Caco-2 (cell line): ENCODE measurements at regions of chr11 and their contacts with region 1.

Region 1: DNA sequence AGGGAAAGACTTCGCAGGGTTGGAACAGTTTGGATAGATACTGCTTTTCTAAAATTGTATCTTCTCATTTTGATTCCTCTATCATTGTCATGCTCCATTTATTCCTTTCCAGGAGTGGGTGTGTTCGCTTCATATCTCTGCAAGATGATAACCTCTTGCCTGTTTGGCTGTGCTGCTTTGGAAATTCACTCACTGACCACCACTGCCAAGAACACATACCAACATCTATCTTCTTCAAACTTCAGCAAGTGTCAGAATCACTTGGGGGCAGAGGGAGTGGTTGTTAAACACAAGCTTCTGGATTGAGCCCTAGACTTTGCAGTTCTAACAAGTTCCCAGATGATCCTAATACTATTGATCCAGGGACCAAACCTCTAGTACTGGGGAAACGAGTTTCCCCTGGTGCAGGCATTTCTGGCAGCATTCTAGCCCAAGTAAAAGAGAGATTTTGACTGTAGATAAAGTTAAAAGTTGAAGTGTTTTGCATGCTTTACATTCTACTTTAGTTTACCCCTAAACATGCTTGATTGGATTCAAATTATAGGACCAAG is 11.5 kb upstream of the DKK3 start:
- DNase-seq: peak in 1 of 2 experiments; percentile 26
- H3K4me3 ChIP-seq: no peak overlapping the region
- H3K4me3 Mint-ChIP-seq: no peak overlapping the region
- H3K27ac Mint-ChIP-seq: peak overlapping the region; percentile 1
- H3K4me1 ChIP-seq: peaks cover 19% of the 10 kb centered on the region
- H3K4me1 Mint-ChIP-seq: peaks cover 11% of the 10 kb centered on the region
- H3K27me3 ChIP-seq: no peaks in the 10 kb centered on the region
- H3K27me3 Mint-ChIP-seq: no peaks in the 10 kb centered on the region
- CTCF ChIP-seq: no peak

Region 2: DNA sequence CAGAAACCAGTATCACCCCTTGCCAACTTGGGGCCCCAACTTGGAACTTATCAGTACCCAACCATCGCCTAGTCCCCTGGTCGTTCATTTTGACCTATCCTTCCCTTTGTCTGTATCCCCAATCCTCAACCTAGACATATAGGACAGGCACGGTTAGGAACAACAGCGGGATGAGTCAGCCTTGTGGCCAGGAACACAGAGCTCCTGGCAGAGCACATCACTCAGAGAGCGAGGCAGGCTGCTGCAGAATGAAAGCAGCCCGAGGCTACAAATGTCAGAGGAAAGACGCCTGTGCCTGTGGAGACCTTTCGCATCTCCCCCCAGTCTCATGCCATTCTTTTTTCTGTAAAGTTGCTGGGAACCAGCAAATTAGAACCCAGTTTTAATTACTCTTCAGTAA is 26.1 kb before region 1 on chr11:
- CTCF ChIA-PET with region 1: no interaction called
- POLR2A ChIA-PET with region 1: no interaction called
- intact Hi-C with region 1: loop called (anchors 2 kb)
- DNase-seq: no peak
- H3K4me3 ChIP-seq: no peak overlapping the region
- H3K4me3 Mint-ChIP-seq: peak overlapping the region; percentile 52
- H3K27ac Mint-ChIP-seq: peak overlapping the region; percentile 95
- H3K4me1 ChIP-seq: peaks cover 50% of the 10 kb centered on the region
- H3K4me1 Mint-ChIP-seq: peaks cover 48% of the 10 kb centered on the region
- H3K27me3 ChIP-seq: no peaks in the 10 kb centered on the region
- H3K27me3 Mint-ChIP-seq: no peaks in the 10 kb centered on the region
- CTCF ChIP-seq: no peak

Region 3: GRCh38 chr11:12075822-12076821 is 56.2 kb after region 1 on chr11:
- CTCF ChIA-PET with region 1: no interaction called
- POLR2A ChIA-PET with region 1: no interaction called
- intact Hi-C with region 1: no loop called
- DNase-seq: peak in 1 of 2 experiments; percentile 24
- H3K4me3 ChIP-seq: no peak overlapping the region
- H3K4me3 Mint-ChIP-seq: no peak overlapping the region
- H3K27ac Mint-ChIP-seq: peak overlapping the region; percentile 1
- H3K4me1 ChIP-seq: peaks cover 29% of the 10 kb centered on the region
- H3K4me1 Mint-ChIP-seq: peaks cover 41% of the 10 kb centered on the region
- H3K27me3 ChIP-seq: no peaks in the 10 kb centered on the region
- H3K27me3 Mint-ChIP-seq: no peaks in the 10 kb centered on the region
- CTCF ChIP-seq: no peak